ENCODE measurements at regions of chr2 and their contacts with region 1.

Region 1: DNA sequence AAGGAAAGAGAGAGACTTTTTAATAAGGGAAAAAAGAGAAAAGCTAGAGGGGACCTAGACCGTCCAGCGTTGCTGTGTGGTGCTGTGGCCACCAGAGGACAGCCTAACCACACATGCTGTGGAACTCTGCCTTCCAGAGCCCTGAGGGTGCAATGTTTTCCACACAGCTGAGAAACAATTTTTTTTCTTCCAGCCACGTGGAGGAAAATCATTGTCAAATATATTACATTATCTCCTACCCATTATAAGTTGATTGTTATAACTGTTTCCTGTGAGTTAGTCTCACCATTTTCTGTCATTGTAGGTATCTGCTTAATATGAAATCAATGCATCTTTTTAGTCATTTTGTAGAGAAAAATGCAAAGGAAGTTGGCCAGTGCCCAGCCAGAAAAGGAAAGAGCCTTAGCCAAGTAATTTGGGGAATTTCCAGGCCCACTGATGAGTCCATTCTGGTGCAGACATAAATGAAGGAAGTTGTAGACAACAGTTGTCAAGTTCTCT is 5.9 kb upstream of the MRPL19 start:
- DNase-seq: peak; percentile 60 to 62
- ATAC-seq: peak; percentile 92 to 97
- H3K4me3 ChIP-seq: no peak overlapping the region
- H3K27ac ChIP-seq: no peak overlapping the region
- H3K4me1 ChIP-seq: no peaks in the 10 kb centered on the region
- CTCF ChIP-seq: peak; percentile 98
- EP300 ChIP-seq: no peak
- POLR2A ChIP-seq: no peak
- RAD21 ChIP-seq: peak; percentile 88 to 94

Region 2: DNA sequence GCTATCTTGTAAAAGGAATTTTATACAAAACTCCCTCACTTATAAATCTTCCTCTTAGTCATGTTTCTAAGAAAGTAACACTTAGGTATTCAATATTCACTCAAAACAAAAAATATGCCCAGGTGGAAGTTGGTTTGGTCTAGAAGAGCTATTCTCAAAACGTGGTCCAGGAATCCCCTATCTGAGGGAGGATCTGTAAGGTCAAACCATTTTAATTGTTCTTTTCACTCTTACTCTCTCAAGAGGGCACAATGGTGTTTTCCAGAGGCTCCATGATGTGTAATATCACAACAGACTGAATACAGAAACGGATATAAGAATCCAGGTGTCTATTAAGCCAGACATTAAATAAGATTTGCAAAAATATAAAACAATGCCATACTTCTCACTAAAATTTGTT is 1471.9 kb before region 1 on chr2:
- CTCF ChIA-PET with region 1: no interaction called
- POLR2A ChIA-PET with region 1: no interaction called
- DNase-seq: no peak
- ATAC-seq: no peak
- H3K4me3 ChIP-seq: no peak overlapping the region
- H3K27ac ChIP-seq: no peak overlapping the region
- H3K4me1 ChIP-seq: no peaks in the 10 kb centered on the region
- CTCF ChIP-seq: no peak
- EP300 ChIP-seq: no peak
- POLR2A ChIP-seq: no peak
- RAD21 ChIP-seq: no peak

Region 3: GRCh38 chr2:75627895-75628504 is 12.7 kb before region 1 on chr2:
- CTCF ChIA-PET with region 1: interaction called, 70 read pairs
- POLR2A ChIA-PET with region 1: no interaction called
- DNase-seq: peak; percentile 80 to 82
- ATAC-seq: peak; percentile 95 to 97
- H3K4me3 ChIP-seq: no peak overlapping the region
- H3K27ac ChIP-seq: no peak overlapping the region
- H3K4me1 ChIP-seq: no peaks in the 10 kb centered on the region
- CTCF ChIP-seq: peak; percentile 97
- EP300 ChIP-seq: no peak
- POLR2A ChIP-seq: no peak
- RAD21 ChIP-seq: peak; percentile 85 to 92

Region 4: DNA sequence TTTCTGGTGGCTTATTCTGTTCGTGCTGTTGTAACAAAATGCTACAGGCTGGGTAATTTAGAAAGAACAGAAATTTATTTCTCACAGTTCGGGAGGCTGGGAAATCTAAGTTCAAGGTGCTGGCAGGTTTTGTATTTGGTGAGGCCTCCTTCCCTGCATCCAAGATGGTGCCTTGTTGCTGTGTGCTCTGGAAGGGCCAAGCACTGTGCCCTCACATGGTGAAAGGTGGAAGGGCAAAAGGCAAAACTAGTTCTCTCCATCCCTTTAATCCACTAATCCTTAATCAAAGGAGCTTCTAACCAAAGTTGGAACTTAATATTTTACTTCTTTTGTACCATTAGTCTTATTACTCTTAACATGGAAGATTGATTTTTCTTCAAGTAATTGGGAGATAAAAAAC is 13.3 kb after region 1 on chr2:
- CTCF ChIA-PET with region 1: interaction called, 23 read pairs
- POLR2A ChIA-PET with region 1: no interaction called
- DNase-seq: no peak
- ATAC-seq: peak in 1 of 2 experiments; percentile 48; a peak in 2 of 6 replicates
- H3K4me3 ChIP-seq: no peak overlapping the region
- H3K27ac ChIP-seq: no peak overlapping the region
- H3K4me1 ChIP-seq: no peaks in the 10 kb centered on the region
- CTCF ChIP-seq: no peak
- EP300 ChIP-seq: no peak
- POLR2A ChIP-seq: no peak
- RAD21 ChIP-seq: no peak

Region 5: GRCh38 chr2:75667884-75668283 is 27.2 kb after region 1 on chr2:
- CTCF ChIA-PET with region 1: interaction called, 14 read pairs
- POLR2A ChIA-PET with region 1: no interaction called
- DNase-seq: no peak
- ATAC-seq: no peak; a peak in 1 of 6 replicates
- H3K4me3 ChIP-seq: no peak overlapping the region
- H3K27ac ChIP-seq: no peak overlapping the region
- H3K4me1 ChIP-seq: 0 out of 3 replicates have a peak, but pooled peaks cover 4% of the 10 kb centered on the region
- CTCF ChIP-seq: no peak
- EP300 ChIP-seq: no peak
- POLR2A ChIP-seq: no peak
- RAD21 ChIP-seq: no peak

Region 6: GRCh38 chr2:75676464-75676863 is 35.8 kb after region 1 on chr2:
- CTCF ChIA-PET with region 1: interaction called, 85 read pairs
- POLR2A ChIA-PET with region 1: no interaction called
- DNase-seq: no peak
- ATAC-seq: no peak
- H3K4me3 ChIP-seq: no peak overlapping the region
- H3K27ac ChIP-seq: no peak overlapping the region
- H3K4me1 ChIP-seq: no peaks in the 10 kb centered on the region
- CTCF ChIP-seq: no peak
- EP300 ChIP-seq: no peak
- POLR2A ChIP-seq: no peak
- RAD21 ChIP-seq: no peak

Region 7: DNA sequence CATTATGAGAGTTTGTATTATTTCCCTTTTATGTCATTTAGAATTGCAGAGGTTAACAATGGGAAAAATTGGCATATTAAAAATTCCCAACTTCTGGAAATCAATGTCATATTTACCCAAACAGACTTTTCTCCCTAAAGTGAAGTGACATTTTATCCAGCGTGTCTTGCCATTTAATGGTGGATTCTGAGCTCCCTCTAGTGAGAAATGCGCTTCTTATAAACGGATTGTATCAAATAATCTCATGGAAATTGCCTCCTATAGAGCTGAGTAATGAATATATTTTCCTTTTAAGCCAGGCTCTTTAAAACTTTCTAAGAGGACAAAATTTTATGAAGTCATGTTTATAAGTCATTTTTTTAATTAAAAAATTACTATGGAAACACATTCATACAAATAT is 75.7 kb after region 1 on chr2:
- CTCF ChIA-PET with region 1: interaction called, 28 read pairs
- POLR2A ChIA-PET with region 1: interaction called, 9 read pairs
- DNase-seq: peak in 1 of 2 experiments; percentile 37
- ATAC-seq: peak in 1 of 2 experiments; percentile 60; a peak in 2 of 6 replicates
- H3K4me3 ChIP-seq: no peak overlapping the region
- H3K27ac ChIP-seq: no peak overlapping the region
- H3K4me1 ChIP-seq: 0 out of 3 replicates have a peak, but pooled peaks cover 2% of the 10 kb centered on the region
- CTCF ChIP-seq: peak; percentile 39
- EP300 ChIP-seq: no peak
- POLR2A ChIP-seq: no peak
- RAD21 ChIP-seq: peak in 1 of 2 experiments; percentile 45; a peak in 3 of 5 replicates